Cardiac septum (tissue), 1 donor: ENCODE measurements at regions of chr15 and their contacts with region 1.

Region 1: DNA sequence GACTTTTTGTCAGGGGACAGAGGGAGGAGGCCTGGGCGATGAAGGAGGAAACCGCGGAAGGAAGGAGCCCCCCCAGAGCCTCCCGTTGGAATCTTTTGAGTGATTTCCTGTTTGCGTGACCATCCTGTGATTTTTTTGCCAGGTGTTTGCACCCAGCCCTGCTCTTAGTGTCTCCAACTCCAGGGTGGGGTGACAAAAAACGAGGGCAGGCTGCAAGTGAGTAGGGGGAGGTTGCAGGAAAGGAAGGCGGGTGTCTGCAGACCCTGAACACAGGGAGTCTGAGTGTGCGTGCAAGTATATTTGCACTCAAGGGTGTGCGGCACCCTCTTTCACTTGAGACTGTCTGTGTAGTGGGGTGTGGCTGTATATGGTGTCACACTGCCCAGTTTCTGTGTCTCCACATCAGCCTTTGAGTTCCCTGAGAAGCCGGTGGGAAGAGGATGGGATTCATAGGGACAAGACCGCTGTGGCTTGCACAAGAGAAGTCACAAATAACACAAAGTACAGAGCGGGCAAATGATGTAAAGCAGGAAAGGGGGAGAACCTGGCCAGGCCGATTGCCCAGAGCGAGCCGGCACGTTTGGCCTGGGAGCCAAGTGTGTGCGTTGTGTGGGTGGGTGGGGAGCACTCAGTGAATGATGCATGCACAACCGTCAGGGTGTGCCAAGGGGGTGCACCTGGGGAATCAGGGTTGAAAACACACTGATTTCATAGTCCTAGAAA is 6.6 kb downstream of the ISLR2 start:
- DNase-seq: no peak

Region 2: GRCh38 chr15:74172701-74173379 is 35.9 kb after region 1 on chr15:
- intact Hi-C with region 1: loop called (anchors 2 kb)
- DNase-seq: peak; percentile 86

Region 3: DNA sequence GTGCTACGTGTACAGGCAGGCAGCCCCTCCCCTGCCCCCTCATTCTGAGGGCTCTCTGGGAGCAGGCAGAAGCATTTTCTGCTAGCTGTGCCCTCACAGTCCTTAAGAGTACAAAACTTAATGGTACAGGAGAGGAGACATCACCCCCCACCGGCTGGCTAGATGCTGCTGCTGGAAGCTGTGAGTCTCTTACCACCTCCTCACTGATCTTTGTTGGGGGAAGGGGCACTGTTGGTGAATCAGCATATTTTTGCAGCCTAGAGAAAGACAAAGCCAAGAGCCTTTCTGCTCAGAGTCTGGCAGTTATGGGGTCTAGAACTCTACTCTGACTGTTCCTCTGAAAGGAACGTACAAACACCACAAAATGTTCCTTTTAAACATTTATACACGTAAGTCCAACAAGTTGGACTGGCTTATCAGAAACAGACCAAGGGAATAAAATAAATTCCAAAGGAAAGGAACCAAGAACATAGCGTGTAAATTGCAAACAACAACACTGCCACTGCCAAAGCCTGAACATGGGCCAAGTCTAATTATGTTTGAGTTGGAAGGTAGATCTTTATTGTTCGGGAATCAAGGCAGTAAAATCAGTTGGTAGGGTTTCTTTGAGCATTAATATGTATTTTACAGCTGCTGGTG is 505.9 kb after region 1 on chr15:
- intact Hi-C with region 1: no loop called
- DNase-seq: no peak